Ascending aorta (tissue), 2 donors: ENCODE measurements at regions of chr14 and their contacts with region 1.

Region 1: DNA sequence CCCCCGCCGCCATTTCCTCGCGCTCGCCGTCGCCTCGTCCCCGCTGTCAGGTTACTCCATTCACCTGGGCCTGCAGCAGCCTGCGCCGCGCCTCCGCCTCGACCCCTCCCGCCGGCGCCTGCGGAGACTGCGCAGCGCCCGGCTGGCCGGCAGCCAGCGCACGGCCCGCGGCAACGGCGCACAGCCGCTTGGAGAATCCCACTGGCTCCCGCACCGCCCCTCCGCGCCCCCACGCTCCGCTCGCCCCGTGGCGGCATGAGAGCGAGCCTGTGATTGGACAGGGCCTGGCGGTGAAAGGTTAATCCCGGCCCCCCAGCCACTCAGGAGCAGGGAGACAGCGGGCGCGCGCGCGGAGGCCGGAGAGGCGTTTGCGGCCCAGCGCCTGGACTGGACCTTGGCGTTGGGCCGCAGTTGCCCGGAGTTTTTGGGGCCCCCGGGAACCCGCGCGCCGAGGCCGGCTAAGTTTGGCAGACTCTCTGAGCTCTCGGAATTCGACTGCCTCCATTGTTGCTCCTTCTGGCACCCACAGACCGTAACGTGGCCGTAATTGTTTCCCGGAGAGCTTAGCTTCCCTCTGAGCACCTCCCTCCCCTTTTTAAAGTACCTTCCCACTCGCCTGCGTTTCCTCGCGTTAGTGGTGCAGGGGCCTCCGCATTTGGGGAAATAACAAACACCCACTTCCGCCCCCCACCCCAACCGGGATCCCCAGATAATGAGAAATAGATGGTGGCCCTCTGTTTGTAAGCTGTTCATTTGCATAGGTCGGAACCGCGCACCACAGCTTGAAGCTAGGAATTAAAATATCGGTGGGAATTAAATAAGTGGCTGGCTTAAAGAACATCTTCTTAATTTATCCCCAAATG is at the start of gene DICER1:
- DNase-seq: peak; percentile 79 to 98
- H3K4me3 ChIP-seq: peak within 1 kb of the TSS; percentile 88 to 97
- H3K27ac ChIP-seq: peak within 1 kb of the TSS; percentile 89 to 94
- H3K4me1 ChIP-seq: peaks cover 3 to 16% of the 10 kb centered on the region in 2 donors
- H3K27me3 ChIP-seq: no peaks in the 10 kb centered on the region
- CTCF ChIP-seq: no peak
- total RNA-seq, gene DICER1: 134 TPM

Region 2: DNA sequence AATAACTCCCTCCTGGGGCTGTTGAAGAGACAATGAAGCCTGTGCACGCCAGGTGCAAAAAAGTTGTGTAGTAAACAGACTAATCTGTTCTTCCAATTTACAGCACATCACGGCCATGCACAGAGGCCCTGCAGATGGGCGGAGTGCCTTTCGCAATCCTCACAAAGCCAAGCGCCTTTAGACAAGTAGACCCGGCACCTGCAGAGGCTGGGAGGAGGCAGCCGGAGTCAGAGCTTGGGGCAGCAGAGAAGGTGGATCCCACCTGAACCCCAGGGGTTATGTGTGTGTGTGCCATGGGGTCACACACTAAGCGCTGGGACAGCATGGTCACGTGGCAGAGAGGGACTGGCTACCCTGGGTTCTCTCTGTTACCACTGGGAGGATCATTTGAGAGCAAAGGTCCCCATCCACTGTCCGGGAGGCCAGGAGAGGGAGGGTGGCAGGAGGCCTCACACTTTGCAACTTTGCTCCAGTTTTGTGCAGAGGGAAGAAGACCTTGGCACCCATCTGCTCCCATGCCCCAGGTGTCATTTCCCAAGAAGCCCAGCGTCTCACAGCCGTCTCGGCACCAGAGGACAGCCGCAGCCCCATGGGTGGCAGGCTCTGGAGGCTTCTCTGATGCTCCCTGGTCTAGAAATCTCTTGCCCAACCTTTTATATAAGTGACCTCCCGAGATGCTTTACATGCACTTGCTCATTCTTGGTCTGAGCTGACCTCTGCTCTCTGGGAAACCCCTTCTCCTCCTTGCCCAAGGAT is 79.7 kb after region 1 on chr14:
- intact Hi-C with region 1: no loop called
- DNase-seq: no peak
- H3K4me3 ChIP-seq: no peak overlapping the region
- H3K27ac ChIP-seq: no peak overlapping the region
- H3K4me1 ChIP-seq: no peaks in the 10 kb centered on the region
- H3K27me3 ChIP-seq: no peaks in the 10 kb centered on the region
- CTCF ChIP-seq: no peak

Region 3: DNA sequence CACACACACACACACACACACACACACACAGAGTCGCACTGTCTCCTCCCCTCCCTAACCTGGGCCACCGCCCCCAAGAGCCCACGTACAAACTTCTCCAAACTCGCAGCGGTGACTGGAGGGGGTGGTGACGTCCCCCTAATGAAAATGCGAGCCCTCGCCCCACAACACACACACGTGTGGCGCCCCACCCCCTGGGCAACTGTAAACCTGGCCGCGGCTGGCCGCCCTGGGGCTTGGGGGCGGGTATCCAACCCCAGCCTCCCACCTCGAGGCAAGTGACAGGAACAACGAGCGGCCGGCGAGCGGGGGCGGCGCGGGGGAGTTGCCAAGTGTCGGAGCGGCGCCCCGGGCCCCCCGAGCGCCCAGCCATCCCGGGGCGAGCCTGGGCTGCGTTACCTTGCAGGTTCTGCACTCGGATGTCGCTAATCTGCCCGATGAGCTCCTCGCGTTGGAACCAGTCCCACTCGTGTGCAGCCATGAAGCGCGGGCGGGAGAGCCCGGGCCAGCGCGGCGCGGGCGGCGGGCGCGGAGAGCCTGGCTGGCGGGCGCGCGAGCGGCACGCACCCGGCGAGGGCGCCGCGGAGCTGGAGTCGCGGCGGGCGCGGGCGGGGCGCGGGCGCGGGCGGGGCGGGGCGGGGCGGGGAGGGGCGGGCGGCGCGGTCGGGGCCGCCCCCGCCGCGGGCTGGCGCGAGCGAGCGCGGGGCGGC is 161.9 kb after region 1 on chr14 and contains the start of gene CLMN:
- intact Hi-C with region 1: loop called (anchors 5 kb)
- DNase-seq: no peak
- H3K4me3 ChIP-seq: peak within 1 kb of the TSS; percentile 88 to 90
- H3K27ac ChIP-seq: peak within 1 kb of the TSS; percentile 23 to 63
- H3K4me1 ChIP-seq: peaks cover 0 to 3% of the 10 kb centered on the region in 2 donors
- H3K27me3 ChIP-seq: no peaks in the 10 kb centered on the region
- CTCF ChIP-seq: no peak
- total RNA-seq, gene CLMN: 4.7 TPM